ENCODE measurements at regions of chr16 and their contacts with region 1.

Region 1: DNA sequence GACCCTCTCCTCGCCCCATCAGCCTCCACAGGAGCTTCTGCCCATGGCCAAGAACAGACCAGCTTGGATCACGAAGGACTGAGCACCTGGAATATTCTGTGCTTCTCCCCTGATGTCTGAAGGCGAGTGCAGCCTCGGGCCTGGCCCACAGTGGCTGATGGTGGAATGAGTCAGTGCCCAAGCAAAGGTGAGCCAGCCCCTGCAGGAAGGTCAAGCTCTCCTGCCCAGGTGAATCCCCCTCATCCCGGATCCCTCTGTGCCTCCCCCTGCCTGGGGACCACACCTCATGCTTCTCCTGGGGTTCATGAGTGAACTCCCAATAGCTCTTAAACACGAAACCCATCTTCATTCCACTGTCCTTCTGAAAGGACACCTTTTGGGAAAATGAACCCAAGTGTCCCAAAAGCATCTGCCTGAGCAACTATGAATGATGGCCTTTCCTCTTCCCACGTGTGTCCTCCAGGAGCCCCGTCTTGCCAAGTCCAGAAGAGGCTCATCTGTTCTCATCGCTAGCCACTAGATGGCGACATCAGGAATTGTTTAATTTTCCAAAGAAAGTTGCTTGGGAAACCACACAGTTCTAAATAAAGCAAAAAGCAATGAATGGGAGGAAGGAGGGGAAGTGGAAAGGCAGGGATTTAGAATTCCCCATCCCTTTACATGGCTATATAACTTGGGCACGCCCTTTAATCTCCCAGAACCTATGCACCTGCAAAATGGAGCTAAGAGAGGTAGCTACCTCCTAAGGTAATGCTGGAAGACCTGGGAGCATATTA is 9.2 kb upstream of the CDH5 start:
- DNase-seq: peak; percentile 84 to 89
- ATAC-seq: peak; percentile 60 to 83
- H3K4me3 ChIP-seq: no peak overlapping the region
- H3K27ac ChIP-seq: no peak overlapping the region
- H3K4me1 ChIP-seq: peaks cover 12% of the 10 kb centered on the region; the same call in 2 of the 3 replicates
- CTCF ChIP-seq: peak; percentile 74
- EP300 ChIP-seq: no peak
- POLR2A ChIP-seq: no peak
- RAD21 ChIP-seq: peak; percentile 47 to 65

Region 2: GRCh38 chr16:66344533-66345145 is 12.7 kb before region 1 on chr16:
- CTCF ChIA-PET with region 1: interaction called, 150 read pairs
- POLR2A ChIA-PET with region 1: no interaction called
- DNase-seq: peak in 1 of 2 experiments; percentile 31
- ATAC-seq: peak in 1 of 2 experiments; percentile 53; a peak in 3 of 6 replicates
- H3K4me3 ChIP-seq: no peak overlapping the region
- H3K27ac ChIP-seq: no peak overlapping the region
- H3K4me1 ChIP-seq: no peaks in the 10 kb centered on the region
- CTCF ChIP-seq: peak; percentile 82
- EP300 ChIP-seq: no peak
- POLR2A ChIP-seq: no peak
- RAD21 ChIP-seq: peak; percentile 16 to 40; a peak in 2 of 5 replicates

Region 3: DNA sequence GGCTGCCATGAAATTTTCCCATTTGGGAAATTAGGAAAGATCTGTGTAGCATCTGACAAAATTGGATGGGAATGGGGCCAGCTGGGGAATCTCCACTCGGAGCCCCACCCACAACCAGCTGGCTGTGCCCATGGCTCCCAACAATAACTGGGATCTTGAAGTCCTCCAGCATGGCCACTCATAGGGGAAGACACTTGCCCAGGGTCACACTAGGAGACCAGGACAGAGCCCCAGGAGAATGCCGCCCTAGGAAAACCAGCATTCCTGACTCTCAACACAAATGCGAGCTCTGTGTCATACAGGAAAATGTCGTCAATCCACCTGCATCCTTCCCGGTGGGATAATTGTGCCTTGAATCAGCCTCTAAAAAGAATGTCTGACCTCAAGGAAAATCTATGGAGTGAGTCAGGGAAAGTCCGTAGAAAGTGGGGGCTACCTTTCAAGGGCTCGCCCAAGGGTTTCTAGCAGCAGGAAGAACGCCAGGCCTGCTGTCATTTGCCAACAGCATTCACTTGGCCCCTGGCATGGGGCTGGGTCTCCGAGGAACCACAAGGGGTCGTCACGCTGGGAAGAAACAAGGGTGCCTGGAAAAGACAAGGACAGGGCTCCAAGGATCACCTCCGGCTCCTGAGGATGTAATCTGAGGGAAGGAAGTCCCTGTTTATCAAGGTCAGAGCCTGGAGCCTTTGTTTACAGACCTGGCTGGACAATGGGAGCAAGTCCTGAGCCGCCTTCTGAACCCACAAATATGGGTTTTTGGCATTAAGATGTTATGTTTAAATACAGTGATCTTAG is 25.0 kb after region 1 on chr16:
- CTCF ChIA-PET with region 1: interaction called, 22 read pairs
- POLR2A ChIA-PET with region 1: no interaction called
- DNase-seq: peak; percentile 47 to 74
- ATAC-seq: peak; percentile 66 to 69
- H3K4me3 ChIP-seq: no peak overlapping the region
- H3K27ac ChIP-seq: peak overlapping the region; percentile 68 to 80
- H3K4me1 ChIP-seq: peaks cover 25% of the 10 kb centered on the region
- CTCF ChIP-seq: no peak
- EP300 ChIP-seq: no peak
- POLR2A ChIP-seq: no peak
- RAD21 ChIP-seq: no peak

Region 4: DNA sequence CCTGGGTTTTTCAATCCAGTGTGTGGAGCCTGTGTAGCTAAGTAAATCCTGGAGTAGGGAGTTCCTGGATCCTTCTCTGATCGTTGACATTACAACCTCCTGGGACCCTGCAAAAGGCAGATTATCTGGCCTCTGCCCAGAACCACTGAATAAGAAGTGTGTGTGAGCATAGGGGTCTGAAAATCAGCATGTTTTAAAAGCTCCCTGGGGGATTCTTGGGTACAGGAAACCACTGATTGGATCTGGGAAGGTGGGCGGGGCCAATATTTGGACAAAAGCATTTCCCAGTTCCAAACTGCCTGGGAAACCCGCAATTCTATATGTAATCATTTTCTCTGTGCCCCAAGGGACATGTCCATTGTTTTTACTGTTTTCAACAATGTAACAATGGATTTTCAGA is 42.6 kb after region 1 on chr16:
- CTCF ChIA-PET with region 1: interaction called, 28 read pairs
- POLR2A ChIA-PET with region 1: no interaction called
- DNase-seq: no peak
- ATAC-seq: no peak
- H3K4me3 ChIP-seq: no peak overlapping the region
- H3K27ac ChIP-seq: no peak overlapping the region
- H3K4me1 ChIP-seq: no peaks in the 10 kb centered on the region
- CTCF ChIP-seq: no peak
- EP300 ChIP-seq: no peak
- POLR2A ChIP-seq: no peak
- RAD21 ChIP-seq: no peak